Dorsolateral prefrontal cortex (tissue), 120 donors: ENCODE measurements at regions of chr7 and their contacts with region 1.

Region 1: DNA sequence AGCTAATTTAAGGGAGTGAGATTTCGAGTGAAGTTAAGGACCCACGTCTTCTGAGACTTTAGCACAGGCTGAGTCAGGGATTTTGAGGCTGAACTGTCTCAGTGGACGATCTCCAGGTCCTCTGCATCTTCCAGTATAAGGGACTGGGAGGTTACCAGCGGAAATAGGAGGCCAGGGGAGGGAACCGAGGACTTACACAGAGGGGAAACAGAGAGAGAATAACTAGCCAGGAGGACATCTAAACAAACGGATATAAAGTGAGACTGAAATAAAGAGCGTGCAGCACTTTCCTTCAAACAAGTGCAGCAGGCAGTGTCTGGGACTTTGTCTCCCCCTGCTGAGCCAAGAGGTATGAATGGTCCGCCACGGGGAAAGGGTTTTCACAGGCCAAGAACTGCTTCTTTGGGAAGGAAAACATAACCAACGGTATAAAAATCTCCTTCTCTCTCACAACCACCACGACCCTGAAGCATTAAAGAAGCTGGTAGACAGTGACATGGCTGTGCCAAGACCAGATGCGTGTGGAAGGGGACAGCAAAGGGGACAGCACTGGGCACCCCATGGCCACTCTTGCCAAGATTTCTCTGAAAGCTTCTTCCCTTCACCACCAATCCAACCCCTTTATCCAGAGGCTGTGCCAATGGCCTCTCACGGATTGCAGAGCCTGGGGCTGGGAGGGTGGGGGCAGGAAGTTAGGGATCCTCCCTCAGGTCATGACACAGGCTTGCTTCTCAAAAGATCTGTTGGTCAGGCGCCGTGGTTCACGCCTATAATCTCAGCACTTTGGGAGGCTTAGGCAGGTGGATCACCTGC is 72.0 kb downstream of the SLC37A3 start:
- DNase-seq: peak in 9 of 10 donors; percentile 40 to 85 (median 75)
- H3K4me3 ChIP-seq: peak overlapping the region in 47 of 59 donors; percentile 0 to 57 (median 31)
- H3K27ac ChIP-seq: peak overlapping the region in 25 of 59 donors; percentile 1 to 66 (median 37)
- H3K27me3 ChIP-seq: no peaks in the 10 kb centered on the region
- CTCF ChIP-seq: peak; percentile 43 to 86 (median 72)

Region 2: DNA sequence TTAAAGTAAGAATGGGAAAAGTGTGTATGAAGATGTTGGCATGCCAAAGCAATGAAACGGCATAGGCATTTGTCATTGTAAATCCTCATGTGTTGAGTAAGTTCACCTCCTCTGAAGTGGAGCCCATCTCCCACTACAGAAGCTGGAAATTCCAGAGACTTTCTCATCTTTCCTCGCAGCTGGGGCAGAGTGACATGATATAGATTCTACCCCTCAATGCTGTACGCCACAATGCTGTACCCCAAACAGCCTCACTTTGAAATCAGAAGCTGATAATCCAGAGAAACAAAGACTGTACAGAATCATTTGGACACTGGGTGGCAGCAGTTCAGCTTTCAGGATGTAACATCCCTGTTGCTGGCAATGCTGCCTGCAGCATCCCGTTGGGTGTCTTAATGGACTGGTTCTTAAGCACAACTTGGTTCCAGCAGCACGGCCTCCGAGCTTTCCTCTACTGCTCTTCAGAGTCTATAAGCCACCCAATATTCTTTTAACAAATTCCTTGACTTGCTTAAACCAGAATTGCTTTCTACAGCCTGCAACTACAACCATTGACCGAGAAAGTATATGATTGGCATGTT is 1309.3 kb before region 1 on chr7:
- intact Hi-C with region 1: loop called in 1 of 2 experiments (anchors 10 kb)
- DNase-seq: peak in 9 of 10 donors; percentile 11 to 81 (median 61)
- H3K4me3 ChIP-seq: no peak overlapping the region
- H3K27ac ChIP-seq: no peak overlapping the region
- H3K27me3 ChIP-seq: peaks cover 0 to 3% (median 0%) of the 10 kb centered on the region in 45 donors
- CTCF ChIP-seq: peak; percentile 30 to 79 (median 68)

Region 3: DNA sequence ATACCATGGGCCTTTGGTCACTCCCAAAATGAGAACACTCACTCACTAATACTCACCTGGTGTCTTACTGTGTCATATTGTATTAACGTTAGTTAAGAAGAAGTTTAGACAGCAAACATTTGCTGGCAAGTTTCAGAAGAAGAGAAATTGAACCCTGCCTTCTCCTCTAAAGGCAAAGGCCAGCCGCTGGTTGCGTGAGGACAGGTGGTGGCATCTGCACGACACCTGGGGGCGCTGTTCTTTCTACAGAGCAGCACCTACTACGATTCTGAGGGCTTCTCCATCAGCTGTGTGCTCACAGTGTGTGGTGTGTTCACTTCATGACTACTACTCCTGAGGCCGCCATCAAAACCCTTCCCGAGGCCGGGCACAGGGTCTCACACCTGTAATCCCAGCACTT is 820.8 kb before region 1 on chr7:
- intact Hi-C with region 1: loop called in 1 of 2 experiments (anchors 10 kb)
- DNase-seq: no peak
- H3K4me3 ChIP-seq: no peak overlapping the region
- H3K27ac ChIP-seq: no peak overlapping the region
- H3K27me3 ChIP-seq: no peaks in the 10 kb centered on the region
- CTCF ChIP-seq: peak in 12 of 56 donors; percentile 9 to 37 (median 16)

Region 4: GRCh38 chr7:139620676-139621344 is 705.5 kb before region 1 on chr7:
- intact Hi-C with region 1: loop called in 1 of 2 experiments (anchors 10 kb)
- DNase-seq: peak in 1 of 10 donors; percentile 37
- H3K4me3 ChIP-seq: no peak overlapping the region
- H3K27ac ChIP-seq: peak overlapping the region in 6 of 59 donors; percentile 16 to 68 (median 29)
- H3K27me3 ChIP-seq: no peaks in the 10 kb centered on the region
- CTCF ChIP-seq: peak; percentile 23 to 78 (median 61)

Region 5: GRCh38 chr7:140175221-140176121 is 150.9 kb before region 1 on chr7:
- intact Hi-C with region 1: loop called in 1 of 2 experiments (anchors 2 kb)
- DNase-seq: peak; percentile 56 to 84 (median 74)
- H3K4me3 ChIP-seq: peak overlapping the region; percentile 65 to 93 (median 81)
- H3K27ac ChIP-seq: peak overlapping the region; percentile 26 to 98 (median 93)
- H3K27me3 ChIP-seq: no peaks in the 10 kb centered on the region
- CTCF ChIP-seq: peak; percentile 59 to 90 (median 80)

Region 6: GRCh38 chr7:140260352-140261104 is 65.8 kb before region 1 on chr7:
- intact Hi-C with region 1: no loop called
- DNase-seq: peak in 2 of 10 donors; percentile 44 to 45
- H3K4me3 ChIP-seq: peak overlapping the region in 4 of 59 donors; percentile 3 to 32 (median 6)
- H3K27ac ChIP-seq: peak overlapping the region in 2 of 59 donors; percentile 6
- H3K27me3 ChIP-seq: no peaks in the 10 kb centered on the region
- CTCF ChIP-seq: peak in 1 of 56 donors; percentile 12

Region 7: DNA sequence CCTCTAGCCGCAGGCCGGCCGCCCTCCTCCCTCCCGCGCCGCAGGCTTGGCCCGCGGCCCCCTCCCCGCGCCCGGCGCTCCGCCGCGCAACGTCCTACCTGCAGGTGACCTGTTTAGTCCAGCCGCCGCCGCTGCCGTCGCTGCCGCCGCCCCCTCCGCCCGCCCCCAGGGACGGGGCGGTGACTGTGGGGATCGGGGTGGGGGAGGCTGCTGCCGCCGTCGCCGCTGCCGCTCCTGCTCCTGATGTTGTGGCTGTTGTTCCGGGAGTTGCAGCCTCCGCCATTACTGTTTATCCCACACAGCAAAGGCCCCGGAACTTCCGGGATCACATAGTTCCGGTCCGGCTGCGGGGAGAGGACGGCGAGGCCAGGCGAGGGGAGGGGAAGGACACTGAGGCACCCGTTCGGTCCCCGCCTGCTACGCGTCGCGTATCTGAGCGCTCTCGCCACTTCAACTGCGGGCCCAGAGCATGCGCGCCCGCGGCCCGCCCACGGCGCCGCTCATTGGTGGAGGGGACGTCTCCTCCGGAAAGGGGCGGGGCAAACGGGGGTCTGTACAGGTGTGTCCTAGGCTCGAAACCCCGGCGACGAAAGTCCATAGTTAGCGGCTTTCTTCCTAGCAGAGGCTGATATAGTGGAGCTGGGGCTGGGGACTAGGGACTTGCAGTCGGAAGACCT is 152.9 kb after region 1 on chr7 and contains the start of gene MKRN1:
- intact Hi-C with region 1: loop called in 1 of 2 experiments (anchors 10 kb)
- DNase-seq: peak; percentile 87 to 98 (median 96)
- H3K4me3 ChIP-seq: peak within 1 kb of the TSS; percentile 66 to 100 (median 94)
- H3K27ac ChIP-seq: peak within 1 kb of the TSS; percentile 17 to 95 (median 86)
- H3K27me3 ChIP-seq: no peaks in the 10 kb centered on the region
- CTCF ChIP-seq: peak in 23 of 56 donors; percentile 0 to 55 (median 23)
- total RNA-seq, gene MKRN1: 64.7 to 117 (median 91.9) TPM